ENCODE measurements at regions of chr10 and their contacts with region 1.

Region 1: DNA sequence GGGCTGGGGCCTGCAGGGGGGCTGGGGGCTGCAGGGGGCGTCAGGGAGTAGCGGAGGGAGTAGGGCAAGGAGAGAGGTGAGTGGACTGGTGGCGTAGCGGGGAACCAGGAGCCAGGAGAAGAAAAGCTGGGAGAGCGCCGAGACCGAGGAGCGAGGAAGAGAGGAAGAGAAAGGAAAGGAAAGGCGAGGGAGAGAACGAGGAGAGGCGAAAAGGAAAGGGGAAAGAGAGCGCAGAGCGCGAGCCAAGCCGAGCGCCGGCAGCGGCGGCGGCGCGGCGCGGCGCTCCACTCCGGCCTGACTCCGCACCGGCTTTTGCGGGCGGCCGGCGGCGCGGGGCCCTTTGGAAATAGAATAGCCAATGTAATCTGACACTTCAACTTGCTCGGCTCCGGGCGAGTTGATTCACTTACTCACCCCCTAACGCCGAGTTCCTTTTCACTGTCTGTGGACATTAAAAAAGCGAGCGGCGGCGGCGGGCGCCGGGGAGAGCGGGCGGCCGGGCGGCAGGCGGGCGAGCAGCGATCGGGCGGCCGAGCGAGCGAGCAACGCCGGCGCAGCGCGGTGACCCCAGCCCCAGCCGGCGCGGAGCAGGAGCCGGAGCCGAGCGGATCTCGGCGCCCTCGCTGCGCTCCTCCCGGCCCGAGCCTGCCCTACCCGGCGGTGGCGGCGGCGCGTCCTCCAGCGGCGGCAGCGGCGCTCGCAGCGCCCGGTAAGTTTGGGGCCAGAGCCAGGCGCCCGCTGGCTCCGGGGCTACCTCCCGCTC is at the start of gene ZMIZ1:
- DNase-seq: peak; percentile 89
- H3K4me3 ChIP-seq: peak within 1 kb of the TSS; percentile 62 to 84 (median 70)
- H3K27ac ChIP-seq: peak within 1 kb of the TSS; percentile 35
- H3K4me1 ChIP-seq: peaks cover 33% of the 10 kb centered on the region
- H3K27me3 ChIP-seq: no peaks in the 10 kb centered on the region
- CTCF ChIP-seq: peak; percentile 9 to 46
- total RNA-seq, gene ZMIZ1: 22.3 to 25.0 TPM

Region 2: GRCh38 chr10:78047314-78047891 is 1021.3 kb before region 1 on chr10:
- CTCF ChIA-PET with region 1: interaction called, 4 read pairs
- dilution Hi-C with region 1: no loop called
- in situ Hi-C with region 1: no loop called
- intact Hi-C with region 1: loop called (anchors 2 kb)
- DNase-seq: peak; percentile 53
- H3K4me3 ChIP-seq: no peak overlapping the region
- H3K27ac ChIP-seq: no peak overlapping the region
- H3K4me1 ChIP-seq: no peaks in the 10 kb centered on the region
- H3K27me3 ChIP-seq: no peaks in the 10 kb centered on the region
- CTCF ChIP-seq: peak; percentile 92

Region 3: DNA sequence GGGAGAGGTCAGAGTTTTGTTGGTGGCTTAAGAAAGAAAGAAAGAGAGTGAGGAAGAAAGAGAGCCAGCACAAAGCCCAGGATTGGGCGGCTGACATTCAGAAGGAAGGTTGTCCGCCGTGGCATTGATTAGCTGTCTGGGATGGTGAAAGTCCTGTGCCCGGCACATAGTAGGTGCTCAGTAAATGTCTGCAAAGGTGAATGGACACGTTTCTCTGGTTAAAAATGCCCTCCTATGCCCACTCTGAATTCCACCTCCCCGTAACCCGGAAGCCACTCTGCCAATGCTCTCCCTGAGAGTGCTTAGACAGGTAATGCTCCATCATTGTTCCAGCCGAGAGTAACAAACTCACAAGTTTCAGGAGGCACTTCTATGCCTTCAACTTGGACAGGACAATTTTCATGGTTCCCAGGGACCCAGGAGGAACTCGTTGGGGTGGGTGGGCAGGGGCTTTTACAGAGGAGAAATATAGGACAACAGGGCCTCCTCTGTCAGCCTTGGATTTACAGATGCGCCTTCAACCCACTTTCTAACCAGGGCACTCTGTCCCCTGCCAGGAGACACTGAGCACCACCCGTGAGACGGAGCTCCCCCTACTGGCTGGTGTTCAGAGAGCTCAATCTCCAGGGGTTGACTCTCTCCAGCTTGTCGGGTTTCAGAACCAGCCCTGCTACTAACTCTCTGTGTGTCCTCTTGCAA is 411.4 kb before region 1 on chr10:
- CTCF ChIA-PET with region 1: no interaction called
- dilution Hi-C with region 1: no loop called
- in situ Hi-C with region 1: loop called in 1 of 2 experiments (anchors 25 kb)
- intact Hi-C with region 1: no loop called
- DNase-seq: peak; percentile 37
- H3K4me3 ChIP-seq: no peak overlapping the region
- H3K27ac ChIP-seq: no peak overlapping the region
- H3K4me1 ChIP-seq: no peaks in the 10 kb centered on the region
- H3K27me3 ChIP-seq: no peaks in the 10 kb centered on the region
- CTCF ChIP-seq: peak; percentile 78 to 95

Region 4: GRCh38 chr10:78925800-78926319 is 142.9 kb before region 1 on chr10:
- CTCF ChIA-PET with region 1: no interaction called
- dilution Hi-C with region 1: no loop called
- in situ Hi-C with region 1: no loop called
- intact Hi-C with region 1: loop called (anchors 2 kb)
- DNase-seq: peak; percentile 97
- H3K4me3 ChIP-seq: no peak overlapping the region
- H3K27ac ChIP-seq: no peak overlapping the region
- H3K4me1 ChIP-seq: peaks cover 23% of the 10 kb centered on the region
- H3K27me3 ChIP-seq: no peaks in the 10 kb centered on the region
- CTCF ChIP-seq: no peak

Region 5: GRCh38 chr10:79047875-79048638 is 20.7 kb before region 1 on chr10:
- CTCF ChIA-PET with region 1: no interaction called
- dilution Hi-C with region 1: no loop called
- in situ Hi-C with region 1: no loop called
- intact Hi-C with region 1: no loop called
- DNase-seq: no peak
- H3K4me3 ChIP-seq: no peak overlapping the region
- H3K27ac ChIP-seq: no peak overlapping the region
- H3K4me1 ChIP-seq: peaks cover 14% of the 10 kb centered on the region
- H3K27me3 ChIP-seq: no peaks in the 10 kb centered on the region
- CTCF ChIP-seq: no peak

Region 6: GRCh38 chr10:79084012-79084971 is 15.5 kb after region 1 on chr10:
- CTCF ChIA-PET with region 1: no interaction called
- dilution Hi-C with region 1: no loop called
- in situ Hi-C with region 1: no loop called
- intact Hi-C with region 1: loop called (anchors 1 kb)
- DNase-seq: peak; percentile 88
- H3K4me3 ChIP-seq: no peak overlapping the region
- H3K27ac ChIP-seq: peak overlapping the region; percentile 85
- H3K4me1 ChIP-seq: peaks cover 78% of the 10 kb centered on the region
- H3K27me3 ChIP-seq: no peaks in the 10 kb centered on the region
- CTCF ChIP-seq: no peak

Region 7: GRCh38 chr10:79184145-79184625 is 115.4 kb after region 1 on chr10:
- CTCF ChIA-PET with region 1: interaction called, 10 read pairs
- dilution Hi-C with region 1: no loop called
- in situ Hi-C with region 1: no loop called
- intact Hi-C with region 1: loop called (anchors 5 kb)
- DNase-seq: peak; percentile 81
- H3K4me3 ChIP-seq: no peak overlapping the region
- H3K27ac ChIP-seq: peak overlapping the region; percentile 40
- H3K4me1 ChIP-seq: peaks cover 61% of the 10 kb centered on the region
- H3K27me3 ChIP-seq: no peaks in the 10 kb centered on the region
- CTCF ChIP-seq: no peak

Measured in mammary epithelial cell (primary cell).